Gastrocnemius medialis (tissue), 4 donors: ENCODE measurements at regions of chr2 and their contacts with region 1.

Region 1: GRCh38 chr2:73611867-73612266 is 30.4 kb downstream of the NAT8 start:
- DNase-seq: no peak
- ATAC-seq: no peak
- H3K4me3 ChIP-seq: no peak overlapping the region
- H3K27ac ChIP-seq: no peak overlapping the region
- H3K4me1 ChIP-seq: no peaks in the 10 kb centered on the region
- H3K27me3 ChIP-seq: no peaks in the 10 kb centered on the region
- CTCF ChIP-seq: no peak
- POLR2A ChIP-seq: no peak

Region 2: GRCh38 chr2:73516033-73516432 is 95.8 kb before region 1 on chr2:
- in situ Hi-C with region 1: no loop called
- intact Hi-C with region 1: no loop called
- DNase-seq: no peak
- ATAC-seq: no peak
- H3K4me3 ChIP-seq: no peak overlapping the region
- H3K27ac ChIP-seq: no peak overlapping the region
- H3K4me1 ChIP-seq: no peaks in the 10 kb centered on the region
- H3K27me3 ChIP-seq: no peaks in the 10 kb centered on the region
- CTCF ChIP-seq: no peak
- POLR2A ChIP-seq: no peak

Region 3: GRCh38 chr2:73697606-73698005 is 85.7 kb after region 1 on chr2:
- in situ Hi-C with region 1: loop called in 1 of 4 experiments (anchors 10 kb)
- intact Hi-C with region 1: no loop called
- DNase-seq: no peak
- ATAC-seq: no peak
- H3K4me3 ChIP-seq: no peak overlapping the region
- H3K27ac ChIP-seq: no peak overlapping the region
- H3K4me1 ChIP-seq: no peaks in the 10 kb centered on the region
- H3K27me3 ChIP-seq: no peaks in the 10 kb centered on the region
- CTCF ChIP-seq: no peak
- POLR2A ChIP-seq: no peak